Right ventricle myocardium inferior (tissue), 1 donor: ENCODE measurements at regions of chr10 and their contacts with region 1.

Region 1: GRCh38 chr10:80136081-80136571 is 3.6 kb downstream of the PLAC9 start:
- DNase-seq: peak; percentile 96
- ATAC-seq: peak; percentile 78

Region 2: DNA sequence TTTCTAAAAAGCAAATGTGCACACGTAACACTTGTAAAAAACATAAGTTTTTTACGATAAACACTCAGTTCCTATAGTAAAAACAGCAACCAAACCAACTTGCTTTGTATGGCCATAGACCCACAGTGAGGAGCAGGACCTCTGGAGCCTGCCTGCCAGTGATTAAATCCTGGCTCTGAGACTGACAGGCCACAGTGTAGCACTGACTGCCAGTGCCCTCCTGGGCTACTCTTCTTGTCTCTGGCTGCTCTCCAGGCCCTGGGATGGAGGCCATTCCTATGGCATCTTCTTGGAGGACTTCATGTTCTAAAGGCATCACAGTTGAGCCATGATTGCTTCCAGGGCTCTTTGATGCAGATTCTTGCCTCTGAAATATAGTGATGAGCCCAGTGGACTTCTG is 80.4 kb before region 1 on chr10:
- intact Hi-C with region 1: loop called (anchors 5 kb)
- DNase-seq: no peak
- ATAC-seq: peak; percentile 78

Region 3: GRCh38 chr10:80078448-80079311 is 57.4 kb before region 1 on chr10 and contains the start of gene TMEM254:
- intact Hi-C with region 1: loop called (anchors 2 kb)
- DNase-seq: peak; percentile 96
- ATAC-seq: peak; percentile 97
- total RNA-seq, gene TMEM254: 9.7 TPM

Region 4: GRCh38 chr10:80148166-80148805 is 12.2 kb after region 1 on chr10:
- intact Hi-C with region 1: no loop called
- DNase-seq: peak; percentile 21
- ATAC-seq: no peak

Region 5: DNA sequence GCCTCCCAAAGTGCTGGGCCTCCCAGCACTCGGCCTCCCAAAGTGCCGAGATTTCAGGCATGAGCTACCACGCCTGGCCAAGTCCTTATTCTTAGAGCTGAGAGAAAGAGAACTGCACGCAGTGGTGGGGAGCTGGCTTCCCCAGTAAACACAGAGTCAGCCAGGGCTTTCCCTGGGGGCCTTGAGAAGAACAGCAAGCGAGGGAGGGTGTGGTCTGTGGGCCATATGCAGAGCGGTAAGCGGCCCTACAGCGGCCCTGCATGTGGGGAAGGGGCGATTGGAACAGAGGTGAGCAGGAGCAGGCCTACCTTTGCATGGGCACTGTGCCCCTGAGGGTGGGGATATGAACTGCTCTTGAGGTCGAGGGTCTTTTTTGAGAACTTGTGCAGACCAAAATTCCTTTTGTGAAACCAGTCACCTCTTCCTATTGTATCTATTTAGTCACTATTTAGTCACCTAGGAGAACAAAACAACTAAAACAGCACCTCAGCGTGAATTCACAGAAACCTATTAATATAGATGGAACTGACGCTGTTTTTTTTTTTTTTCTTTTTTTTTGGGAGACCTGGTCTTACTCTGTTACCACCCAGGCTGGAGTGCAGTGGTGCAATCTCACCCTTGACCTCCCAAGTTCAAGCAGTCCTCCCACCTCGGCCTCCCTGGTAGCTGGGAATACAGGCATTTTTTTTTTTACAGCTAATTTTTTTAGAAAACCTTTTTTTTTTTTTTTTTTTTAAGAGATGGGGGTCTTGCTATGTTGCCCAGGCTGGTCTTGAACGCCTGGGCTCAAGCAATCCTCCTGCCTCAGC is 364.6 kb after region 1 on chr10:
- intact Hi-C with region 1: no loop called
- DNase-seq: peak; percentile 84
- ATAC-seq: peak; percentile 44